Caco-2 (cell line): ENCODE measurements at regions of chr16 and their contacts with region 1.

Region 1: DNA sequence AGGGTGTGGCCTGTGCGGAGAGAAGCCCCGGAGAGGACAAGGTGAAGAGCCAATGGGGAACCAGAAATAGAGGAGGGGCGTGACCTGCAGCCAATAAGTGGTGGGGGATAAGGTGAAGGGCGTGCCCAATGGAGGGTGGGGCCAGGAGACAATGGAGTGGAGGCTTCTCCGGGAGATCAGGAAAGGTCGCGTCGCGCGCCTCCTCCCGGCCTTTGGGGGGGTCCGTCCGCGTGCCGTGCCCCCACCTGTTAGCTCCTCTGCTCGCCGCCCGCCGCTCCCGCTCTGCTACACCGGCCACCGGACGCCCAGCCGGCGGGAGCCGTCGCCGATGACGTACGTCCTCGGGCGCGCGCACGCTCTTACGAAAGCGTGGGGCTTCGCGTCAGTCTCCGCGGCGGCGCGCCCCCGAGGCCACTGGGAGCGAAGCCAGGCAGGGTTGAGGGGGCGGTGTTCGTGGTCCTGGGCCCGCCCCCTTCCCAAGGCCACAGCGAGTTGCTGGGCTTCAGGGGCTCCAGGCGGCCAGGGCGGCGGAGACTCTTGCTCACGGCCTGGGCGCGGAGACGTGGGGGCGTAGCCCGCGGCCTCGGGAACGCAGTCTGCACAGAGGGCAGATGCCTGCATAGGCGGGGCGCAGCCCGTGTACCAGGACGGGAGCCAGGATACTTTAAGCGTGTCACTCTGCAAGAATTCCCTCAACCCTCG is at the start of gene MATCAP1:
- DNase-seq: peak; percentile 98 to 99
- H3K4me3 ChIP-seq: peak within 1 kb of the TSS; percentile 90
- H3K4me3 Mint-ChIP-seq: no peak within 1 kb of the TSS
- H3K27ac Mint-ChIP-seq: no peak within 1 kb of the TSS
- H3K4me1 ChIP-seq: peaks cover 40% of the 10 kb centered on the region
- H3K4me1 Mint-ChIP-seq: peaks cover 12% of the 10 kb centered on the region
- H3K27me3 ChIP-seq: no peaks in the 10 kb centered on the region
- H3K27me3 Mint-ChIP-seq: peaks cover 3% of the 10 kb centered on the region
- CTCF ChIP-seq: no peak
- total RNA-seq, gene MATCAP1: 22.2 and 28.6 TPM in 2 replicates

Region 2: DNA sequence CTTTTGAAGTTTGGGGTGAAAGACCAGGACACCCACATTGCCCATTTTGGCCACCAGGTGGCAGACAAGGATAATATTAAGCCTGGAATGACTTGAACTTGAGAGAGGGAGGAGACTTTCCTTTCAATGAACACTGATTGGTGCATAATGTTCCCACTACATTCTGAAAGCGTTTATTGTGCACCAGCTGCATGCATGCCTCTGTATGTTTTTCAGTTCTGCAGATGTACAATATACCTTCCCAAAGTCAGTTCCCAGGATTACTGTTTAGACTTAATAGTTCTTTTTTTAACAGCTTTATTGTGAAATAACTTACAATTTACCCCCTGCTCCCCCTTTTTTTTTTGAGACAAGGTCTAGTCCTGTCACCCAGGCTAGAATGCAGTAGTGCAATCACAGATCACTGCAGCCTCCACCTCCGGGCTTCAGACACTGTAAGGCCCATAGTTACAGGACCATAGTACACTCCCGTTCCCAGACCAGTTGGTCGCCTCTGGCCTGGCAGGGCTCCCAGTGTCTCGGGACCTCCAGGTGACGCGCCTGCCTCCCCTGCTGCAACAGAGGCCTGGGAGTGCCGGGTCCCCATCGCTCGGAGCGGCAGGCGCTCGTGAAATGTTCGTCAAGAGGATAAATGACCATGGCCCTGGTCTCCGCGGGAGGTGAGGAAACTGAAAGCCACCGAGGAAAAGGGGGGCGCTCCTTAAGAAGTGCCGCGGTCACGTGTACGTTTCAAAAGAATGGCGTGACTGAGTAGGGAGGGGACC is 236.3 kb before region 1 on chr16:
- CTCF ChIA-PET with region 1: no interaction called
- POLR2A ChIA-PET with region 1: no interaction called
- intact Hi-C with region 1: loop called (anchors 2 kb)
- DNase-seq: peak; percentile 81 to 87
- H3K4me3 ChIP-seq: no peak overlapping the region
- H3K4me3 Mint-ChIP-seq: peak overlapping the region; percentile 40
- H3K27ac Mint-ChIP-seq: peak overlapping the region; percentile 48
- H3K4me1 ChIP-seq: no peaks in the 10 kb centered on the region
- H3K4me1 Mint-ChIP-seq: no peaks in the 10 kb centered on the region
- H3K27me3 ChIP-seq: no peaks in the 10 kb centered on the region
- H3K27me3 Mint-ChIP-seq: no peaks in the 10 kb centered on the region
- CTCF ChIP-seq: peak; percentile 82 to 87

Region 3: GRCh38 chr16:66954097-66954659 is 229.6 kb before region 1 on chr16:
- CTCF ChIA-PET with region 1: interaction called, 10 read pairs
- POLR2A ChIA-PET with region 1: no interaction called
- intact Hi-C with region 1: loop called (anchors 1 kb)
- DNase-seq: peak; percentile 81 to 88
- H3K4me3 ChIP-seq: no peak overlapping the region
- H3K4me3 Mint-ChIP-seq: peak overlapping the region; percentile 50
- H3K27ac Mint-ChIP-seq: peak overlapping the region; percentile 72
- H3K4me1 ChIP-seq: peaks cover 17% of the 10 kb centered on the region
- H3K4me1 Mint-ChIP-seq: peaks cover 15% of the 10 kb centered on the region
- H3K27me3 ChIP-seq: no peaks in the 10 kb centered on the region
- H3K27me3 Mint-ChIP-seq: no peaks in the 10 kb centered on the region
- CTCF ChIP-seq: peak; percentile 88 to 90

Region 4: DNA sequence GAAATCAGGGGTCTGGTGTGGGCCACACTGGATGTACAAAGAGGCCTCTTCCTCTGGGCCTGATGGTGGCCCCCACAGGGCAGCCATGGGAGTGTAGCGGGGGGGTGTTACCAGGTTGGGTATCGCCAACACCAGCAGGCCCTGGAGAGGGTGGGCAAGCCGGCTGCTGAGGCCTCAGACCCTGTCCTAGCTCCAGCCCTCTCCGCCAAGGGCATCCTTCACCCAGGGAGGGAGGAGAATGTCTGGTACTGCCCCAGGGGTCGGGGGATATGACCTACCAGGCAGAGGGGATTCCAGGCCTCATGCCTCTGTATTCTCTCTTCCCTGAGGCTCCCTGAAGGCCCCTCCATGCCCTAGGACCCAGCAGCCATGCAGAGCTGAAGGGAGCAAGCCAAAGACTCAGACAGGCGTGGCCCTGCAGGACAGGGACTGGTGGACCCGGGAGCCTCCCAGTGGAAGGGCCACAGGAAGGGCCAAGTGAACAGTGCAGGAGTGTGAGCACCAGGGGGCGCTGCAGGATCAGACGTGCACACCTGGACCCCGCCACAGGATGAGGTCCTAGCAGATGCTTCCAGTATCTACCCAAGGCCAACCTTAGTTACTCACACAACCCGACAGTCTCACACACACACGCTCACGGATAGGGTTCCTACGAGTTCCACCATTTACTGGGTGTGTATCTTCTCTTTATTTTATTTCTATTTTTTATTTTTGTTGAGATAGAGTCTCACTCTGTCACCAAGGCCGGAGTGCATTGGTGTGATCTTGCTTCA is 206.3 kb before region 1 on chr16:
- CTCF ChIA-PET with region 1: no interaction called
- POLR2A ChIA-PET with region 1: no interaction called
- intact Hi-C with region 1: loop called (anchors 1 kb)
- DNase-seq: peak; percentile 89 to 95
- H3K4me3 ChIP-seq: no peak overlapping the region
- H3K4me3 Mint-ChIP-seq: no peak overlapping the region
- H3K27ac Mint-ChIP-seq: no peak overlapping the region
- H3K4me1 ChIP-seq: no peaks in the 10 kb centered on the region
- H3K4me1 Mint-ChIP-seq: no peaks in the 10 kb centered on the region
- H3K27me3 ChIP-seq: no peaks in the 10 kb centered on the region
- H3K27me3 Mint-ChIP-seq: no peaks in the 10 kb centered on the region
- CTCF ChIP-seq: peak; percentile 98 to 99

Region 5: GRCh38 chr16:67109407-67110135 is 74.2 kb before region 1 on chr16 and contains the start of gene PHAF1:
- CTCF ChIA-PET with region 1: no interaction called
- POLR2A ChIA-PET with region 1: no interaction called
- intact Hi-C with region 1: loop called (anchors 2 kb)
- DNase-seq: peak; percentile 96 to 99
- H3K4me3 ChIP-seq: peak within 1 kb of the TSS; percentile 67
- H3K4me3 Mint-ChIP-seq: peak within 1 kb of the TSS; percentile 97
- H3K27ac Mint-ChIP-seq: peak within 1 kb of the TSS; percentile 93
- H3K4me1 ChIP-seq: peaks cover 42% of the 10 kb centered on the region
- H3K4me1 Mint-ChIP-seq: peaks cover 26% of the 10 kb centered on the region
- H3K27me3 ChIP-seq: no peaks in the 10 kb centered on the region
- H3K27me3 Mint-ChIP-seq: no peaks in the 10 kb centered on the region
- CTCF ChIP-seq: no peak
- total RNA-seq, gene PHAF1: 34.4 and 38.5 TPM in 2 replicates

Region 6: DNA sequence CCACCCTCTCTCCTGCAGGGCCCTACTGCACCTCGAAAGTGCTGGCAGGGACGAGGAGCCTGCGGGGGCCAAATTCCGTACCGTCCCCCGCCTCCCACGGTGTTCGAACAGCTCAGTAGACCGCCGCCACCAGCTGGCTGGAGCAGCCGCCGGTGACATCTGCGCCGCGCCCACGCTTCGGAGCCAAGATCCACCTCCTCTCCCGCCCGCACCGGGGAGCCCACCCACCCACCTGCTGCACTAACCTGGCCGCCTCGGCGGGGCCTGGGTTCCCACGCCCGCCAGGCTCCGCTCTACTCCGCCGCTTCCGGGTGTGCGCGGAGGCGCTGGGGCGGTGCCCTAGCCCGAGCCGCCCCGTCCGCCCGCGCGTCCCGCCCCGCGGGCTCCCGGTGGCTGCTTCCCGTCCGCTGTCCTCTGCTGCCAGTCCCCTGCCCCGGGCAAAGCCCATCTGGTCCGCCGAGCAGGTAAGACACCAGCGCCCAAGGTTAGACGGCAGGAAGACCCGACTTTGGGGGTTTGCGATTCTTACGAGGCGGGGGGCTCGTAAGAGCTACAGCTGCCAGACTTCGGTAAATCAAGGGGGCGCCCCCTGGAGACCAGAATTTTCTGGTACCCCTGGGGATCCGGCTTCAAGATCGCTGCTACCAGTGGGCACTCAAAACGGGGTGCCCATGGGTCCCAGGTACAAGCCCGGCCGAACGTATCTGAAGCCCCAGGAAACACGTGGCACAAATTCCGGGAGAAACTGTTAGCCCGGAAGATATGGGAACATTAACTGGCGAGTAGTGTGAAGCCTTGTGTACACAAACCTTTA is 24.0 kb before region 1 on chr16 and contains the starts of genes FBXL8 and TRADD:
- CTCF ChIA-PET with region 1: interaction called, 13 read pairs
- POLR2A ChIA-PET with region 1: no interaction called
- intact Hi-C with region 1: loop called (anchors 1 kb)
- DNase-seq: peak; percentile 77 to 89
- H3K4me3 ChIP-seq: peak within 1 kb of the TSS; percentile 94
- H3K4me3 Mint-ChIP-seq: peak within 1 kb of the TSS; percentile 86
- H3K27ac Mint-ChIP-seq: peak within 1 kb of the TSS; percentile 82
- H3K4me1 ChIP-seq: peaks cover 6% of the 10 kb centered on the region; the same call in 1 of the 2 replicates
- H3K4me1 Mint-ChIP-seq: peaks cover 6% of the 10 kb centered on the region
- H3K27me3 ChIP-seq: no peaks in the 10 kb centered on the region
- H3K27me3 Mint-ChIP-seq: no peaks in the 10 kb centered on the region
- CTCF ChIP-seq: peak; percentile 67 to 70
- total RNA-seq, gene FBXL8: 27.6 and 31.5 TPM in 2 replicates
- total RNA-seq, gene TRADD: 16.8 and 18.3 TPM in 2 replicates

Region 7: GRCh38 chr16:67198238-67198734 is 14.5 kb after region 1 on chr16:
- CTCF ChIA-PET with region 1: interaction called, 11 read pairs
- POLR2A ChIA-PET with region 1: interaction called, 3 read pairs
- intact Hi-C with region 1: loop called (anchors 1 kb)
- DNase-seq: peak in 1 of 2 experiments; percentile 53
- H3K4me3 ChIP-seq: 0 out of 2 replicates have a peak overlapping the region, but pooled peaks have one; percentile 11
- H3K4me3 Mint-ChIP-seq: peak overlapping the region; percentile 84
- H3K27ac Mint-ChIP-seq: no peak overlapping the region
- H3K4me1 ChIP-seq: peaks cover 27% of the 10 kb centered on the region
- H3K4me1 Mint-ChIP-seq: peaks cover 23% of the 10 kb centered on the region
- H3K27me3 ChIP-seq: no peaks in the 10 kb centered on the region
- H3K27me3 Mint-ChIP-seq: no peaks in the 10 kb centered on the region
- CTCF ChIP-seq: peak; percentile 40 to 58